ENCODE measurements at regions of chr10 and their contacts with region 1.

Region 1: DNA sequence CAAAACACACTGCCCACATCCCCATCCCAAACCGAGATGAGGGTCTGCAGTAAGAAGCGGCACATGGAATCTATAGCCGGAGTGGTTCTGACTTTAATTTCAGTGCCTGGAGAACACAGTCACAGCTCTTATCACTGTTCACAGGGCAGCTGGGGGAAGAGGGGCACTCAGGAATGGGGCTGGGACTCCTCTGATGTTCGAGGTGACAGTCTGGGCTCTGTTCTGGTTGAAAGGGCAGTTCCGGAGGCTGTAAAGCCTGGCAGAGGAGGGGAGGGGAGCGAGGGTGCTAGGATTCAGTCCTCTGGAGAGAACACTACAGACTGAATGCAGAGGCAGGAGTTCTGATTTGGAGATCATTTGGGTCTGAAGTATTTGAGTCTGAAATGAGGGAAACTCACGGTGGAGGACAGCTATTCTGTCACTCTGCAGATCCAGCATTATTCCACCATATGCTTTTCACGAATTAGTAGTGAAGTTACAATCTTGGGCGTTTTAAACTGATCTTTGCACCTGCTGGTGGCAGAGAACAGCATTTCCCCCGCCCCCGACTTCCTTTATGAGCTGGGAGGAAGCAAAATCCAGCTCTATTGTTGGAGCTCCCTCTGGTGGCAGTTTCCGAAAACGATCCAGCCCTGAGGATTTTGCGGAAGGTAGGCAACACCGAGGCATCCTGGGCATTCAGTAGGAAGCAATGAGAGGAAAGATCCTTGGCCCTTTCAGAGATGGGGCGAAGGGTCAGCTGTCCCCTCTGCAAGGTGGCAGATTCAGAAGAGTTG is 22.7 kb upstream of the KCNK18 start:
- DNase-seq: no peak
- H3K4me3 ChIP-seq: peak overlapping the region; percentile 41
- H3K27me3 ChIP-seq: peaks cover 7% of the 10 kb centered on the region
- CTCF ChIP-seq: peak; percentile 89

Region 2: GRCh38 chr10:116683821-116684220 is 490.8 kb before region 1 on chr10:
- CTCF ChIA-PET with region 1: interaction called, 27 read pairs
- POLR2A ChIA-PET with region 1: no interaction called
- DNase-seq: no peak
- H3K4me3 ChIP-seq: no peak overlapping the region
- H3K27me3 ChIP-seq: no peaks in the 10 kb centered on the region
- CTCF ChIP-seq: no peak

Region 3: DNA sequence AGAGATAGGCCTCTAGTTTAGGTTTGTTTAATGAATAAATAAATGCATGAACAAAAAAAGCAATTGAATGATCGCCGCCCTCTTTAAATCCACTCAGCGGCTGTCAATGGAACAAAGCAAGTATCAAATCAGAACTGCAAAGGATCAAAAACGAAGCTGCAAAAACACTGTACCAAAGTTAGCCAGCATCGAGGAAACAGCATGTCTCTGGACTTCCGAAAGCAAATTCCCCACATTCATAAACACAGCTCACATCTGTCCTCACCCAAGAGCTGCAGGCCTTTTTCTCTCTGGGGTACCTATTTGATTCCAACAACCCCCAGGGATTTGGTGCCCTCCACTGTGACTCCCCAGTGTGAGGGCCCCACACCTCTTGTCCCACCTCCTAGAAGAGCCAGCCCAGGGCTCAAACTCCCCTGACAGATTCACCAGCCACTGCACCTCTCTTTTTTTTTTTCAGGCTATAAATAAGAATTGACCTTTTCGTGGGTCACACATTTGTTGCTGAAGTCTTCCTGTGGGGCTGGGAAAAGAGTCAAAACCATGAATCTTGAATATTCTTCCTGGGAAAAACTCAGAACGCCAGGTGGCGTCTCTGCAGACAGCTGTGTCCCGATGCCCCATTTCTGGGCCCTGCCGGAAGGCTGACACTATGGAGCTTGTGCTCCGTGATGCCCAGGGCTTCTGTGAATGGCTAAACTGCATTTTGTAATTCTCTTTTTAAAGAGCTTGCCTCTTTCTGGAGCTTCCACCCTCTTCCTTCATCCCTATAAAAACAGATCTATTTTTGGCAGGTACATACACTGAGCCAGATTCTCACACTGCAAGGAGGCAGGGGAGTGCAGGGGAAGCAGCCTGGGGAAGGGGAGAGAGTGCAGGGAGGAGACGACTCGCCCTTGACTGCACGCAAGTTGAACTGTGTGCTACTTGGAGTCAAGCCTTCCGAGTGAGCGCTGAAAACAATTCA is 484.0 kb before region 1 on chr10:
- CTCF ChIA-PET with region 1: interaction called, 11 read pairs
- POLR2A ChIA-PET with region 1: no interaction called
- DNase-seq: no peak
- H3K4me3 ChIP-seq: no peak overlapping the region
- H3K27me3 ChIP-seq: no peaks in the 10 kb centered on the region
- CTCF ChIP-seq: no peak

Region 4: GRCh38 chr10:116779076-116779687 is 395.4 kb before region 1 on chr10:
- CTCF ChIA-PET with region 1: interaction called, 11 read pairs
- POLR2A ChIA-PET with region 1: no interaction called
- DNase-seq: no peak
- H3K4me3 ChIP-seq: no peak overlapping the region
- H3K27me3 ChIP-seq: no peaks in the 10 kb centered on the region; the same call in 1 of the 2 replicates
- CTCF ChIP-seq: no peak

Region 5: GRCh38 chr10:116796910-116797513 is 377.6 kb before region 1 on chr10:
- CTCF ChIA-PET with region 1: interaction called, 736 read pairs
- POLR2A ChIA-PET with region 1: no interaction called
- DNase-seq: no peak
- H3K4me3 ChIP-seq: no peak overlapping the region
- H3K27me3 ChIP-seq: no peaks in the 10 kb centered on the region
- CTCF ChIP-seq: peak; percentile 94

Region 6: GRCh38 chr10:117162093-117163021 is 12.3 kb before region 1 on chr10:
- CTCF ChIA-PET with region 1: interaction called, 54 read pairs
- POLR2A ChIA-PET with region 1: no interaction called
- DNase-seq: no peak
- H3K4me3 ChIP-seq: peak overlapping the region; percentile 12; the same call in 1 of the 2 replicates
- H3K27me3 ChIP-seq: peaks cover 32% of the 10 kb centered on the region
- CTCF ChIP-seq: no peak

Region 7: GRCh38 chr10:117226824-117227451 is 52.3 kb after region 1 on chr10:
- CTCF ChIA-PET with region 1: no interaction called
- POLR2A ChIA-PET with region 1: no interaction called
- DNase-seq: no peak
- H3K4me3 ChIP-seq: no peak overlapping the region
- H3K27me3 ChIP-seq: no peaks in the 10 kb centered on the region; the same call in none of the 2 replicates
- CTCF ChIP-seq: peak; percentile 57

Measured in BJ (cell line).